MCF 10A (cell line): ENCODE measurements at regions of chr6 and their contacts with region 1.

Region 1: DNA sequence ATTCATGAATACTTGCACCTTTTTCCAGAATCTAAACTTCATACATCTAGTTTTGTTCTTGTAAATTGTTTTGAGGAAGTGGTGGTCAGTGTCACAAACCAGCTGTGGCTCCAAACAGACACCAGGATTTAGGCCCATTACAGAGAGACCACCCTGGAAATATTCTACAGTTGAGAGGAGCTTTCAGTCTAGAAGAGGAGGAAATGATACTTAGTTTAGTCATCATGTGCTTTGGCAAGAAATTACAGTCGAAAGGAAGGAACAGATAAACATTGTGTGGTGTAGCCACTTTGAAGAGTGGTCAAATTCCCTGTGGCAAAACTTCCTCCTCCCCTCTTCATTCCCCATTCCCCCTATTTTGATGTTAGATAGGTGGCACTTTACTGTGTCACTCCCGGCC is 15.7 kb downstream of the DCBLD1 start:
- DNase-seq: peak; percentile 80
- H3K4me3 Mint-ChIP-seq: peak overlapping the region; percentile 57
- H3K27ac Mint-ChIP-seq: peak overlapping the region; percentile 98
- H3K4me1 Mint-ChIP-seq: peaks cover 60% of the 10 kb centered on the region
- H3K27me3 Mint-ChIP-seq: no peaks in the 10 kb centered on the region
- CTCF ChIP-seq: no peak

Region 2: DNA sequence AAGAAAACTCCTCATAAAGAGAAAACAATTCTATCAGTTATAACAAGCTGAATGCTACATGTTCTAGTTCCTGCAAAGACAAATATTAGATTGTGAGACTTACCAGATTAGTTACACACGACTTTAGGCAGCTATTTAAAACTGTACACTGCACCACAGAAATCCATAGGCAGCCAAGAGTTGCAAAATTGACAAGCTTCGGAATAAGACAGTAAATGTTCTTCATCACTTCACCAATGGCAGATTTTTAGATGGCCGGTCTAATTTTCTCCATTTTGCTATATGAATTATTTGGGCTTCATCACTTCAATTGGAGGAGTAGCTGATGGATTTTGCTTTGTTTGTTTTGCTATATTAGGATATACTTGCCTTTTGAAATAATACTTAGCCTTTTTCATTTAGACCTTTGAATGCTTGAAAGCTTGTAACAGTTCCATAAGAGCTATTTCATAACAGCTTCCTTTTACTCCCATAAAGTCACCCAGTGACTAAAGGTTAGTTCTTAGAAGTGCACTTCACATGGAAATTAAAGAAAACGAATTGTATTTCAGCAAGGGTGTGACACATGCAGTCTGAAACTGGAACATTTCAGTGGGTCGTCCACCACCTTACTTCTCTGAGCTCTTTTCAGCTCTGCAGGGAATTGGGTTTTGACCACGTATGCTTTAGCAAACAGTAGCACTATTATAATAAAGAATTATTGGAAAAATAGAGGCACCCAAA is 72.6 kb before region 1 on chr6 and contains the start of gene ROS1:
- CTCF ChIA-PET with region 1: no interaction called
- POLR2A ChIA-PET with region 1: interaction called, 24 read pairs
- intact Hi-C with region 1: no loop called
- DNase-seq: peak; percentile 70
- H3K4me3 Mint-ChIP-seq: peak within 1 kb of the TSS; percentile 79
- H3K27ac Mint-ChIP-seq: peak within 1 kb of the TSS; percentile 76
- H3K4me1 Mint-ChIP-seq: peaks cover 24% of the 10 kb centered on the region
- H3K27me3 Mint-ChIP-seq: no peaks in the 10 kb centered on the region
- CTCF ChIP-seq: no peak
- total RNA-seq, gene ROS1: 63.0 and 69.6 TPM in 2 replicates

Region 3: GRCh38 chr6:117509021-117509420 is 10.9 kb after region 1 on chr6:
- CTCF ChIA-PET with region 1: no interaction called
- POLR2A ChIA-PET with region 1: interaction called, 15 read pairs
- intact Hi-C with region 1: no loop called
- DNase-seq: no peak
- H3K4me3 Mint-ChIP-seq: no peak overlapping the region
- H3K27ac Mint-ChIP-seq: no peak overlapping the region
- H3K4me1 Mint-ChIP-seq: peaks cover 27% of the 10 kb centered on the region
- H3K27me3 Mint-ChIP-seq: no peaks in the 10 kb centered on the region
- CTCF ChIP-seq: no peak

Region 4: DNA sequence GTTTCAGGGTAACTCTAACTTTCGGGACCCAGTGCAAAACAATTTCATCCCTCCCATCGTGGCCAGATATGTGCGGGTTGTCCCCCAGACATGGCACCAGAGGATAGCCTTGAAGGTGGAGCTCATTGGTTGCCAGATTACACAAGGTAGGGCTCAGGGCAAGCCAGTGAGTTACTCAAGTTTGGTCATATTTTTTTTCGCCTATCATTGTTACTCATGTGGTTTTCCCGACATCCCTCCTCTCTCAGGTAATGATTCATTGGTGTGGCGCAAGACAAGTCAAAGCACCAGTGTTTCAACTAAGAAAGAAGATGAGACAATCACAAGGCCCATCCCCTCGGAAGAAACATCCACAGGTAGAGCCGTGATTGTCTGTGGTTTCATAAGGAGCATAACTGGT is 42.5 kb after region 1 on chr6:
- CTCF ChIA-PET with region 1: interaction called, 3 read pairs
- POLR2A ChIA-PET with region 1: interaction called, 14 read pairs
- intact Hi-C with region 1: loop called (anchors 5 kb)
- DNase-seq: peak; percentile 94
- H3K4me3 Mint-ChIP-seq: no peak overlapping the region
- H3K27ac Mint-ChIP-seq: no peak overlapping the region
- H3K4me1 Mint-ChIP-seq: peaks cover 46% of the 10 kb centered on the region
- H3K27me3 Mint-ChIP-seq: no peaks in the 10 kb centered on the region
- CTCF ChIP-seq: no peak